GM12878 (cell line): ENCODE measurements at regions of chr7 and their contacts with region 1.

Region 1: DNA sequence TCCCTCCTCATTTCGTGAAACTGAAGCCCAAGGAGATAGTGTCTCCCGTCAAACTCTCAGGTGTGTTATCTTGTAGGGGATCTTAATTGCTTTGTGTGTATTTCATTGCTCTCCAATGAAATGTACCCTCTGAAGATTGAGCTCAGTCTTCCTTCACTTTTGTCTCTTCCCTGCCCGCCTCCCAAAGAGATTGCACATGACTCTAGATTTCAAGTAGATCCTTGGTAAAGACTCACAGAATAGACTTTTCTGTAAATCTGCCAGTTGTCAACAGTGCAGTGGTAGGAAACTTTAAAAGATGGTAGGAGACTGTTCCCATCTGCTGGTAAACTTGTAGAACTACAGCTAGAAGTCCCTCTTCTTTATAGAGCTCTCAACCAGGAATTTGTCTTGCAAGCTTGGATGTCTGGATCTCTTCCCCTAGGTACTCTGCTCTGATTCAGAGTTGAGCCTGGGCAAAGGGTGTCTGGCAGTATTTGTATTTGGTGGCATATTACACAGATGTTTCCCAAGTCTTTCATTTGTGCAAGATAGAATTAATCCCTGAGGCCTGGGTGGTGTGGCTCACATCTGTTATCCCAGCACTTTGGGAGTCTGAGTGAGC is 9.6 kb downstream of the CCL26 start:
- DNase-seq: peak; percentile 40
- ATAC-seq: peak; percentile 92
- H3K4me3 ChIP-seq: no peak overlapping the region
- H3K27ac ChIP-seq: no peak overlapping the region
- H3K4me1 ChIP-seq: no peaks in the 10 kb centered on the region
- H3K27me3 ChIP-seq: no peaks in the 10 kb centered on the region
- CTCF ChIP-seq: peak; percentile 72 to 80 (median 73)
- EP300 ChIP-seq: no peak
- POLR2A ChIP-seq: no peak
- RAD21 ChIP-seq: peak; percentile 94

Region 2: DNA sequence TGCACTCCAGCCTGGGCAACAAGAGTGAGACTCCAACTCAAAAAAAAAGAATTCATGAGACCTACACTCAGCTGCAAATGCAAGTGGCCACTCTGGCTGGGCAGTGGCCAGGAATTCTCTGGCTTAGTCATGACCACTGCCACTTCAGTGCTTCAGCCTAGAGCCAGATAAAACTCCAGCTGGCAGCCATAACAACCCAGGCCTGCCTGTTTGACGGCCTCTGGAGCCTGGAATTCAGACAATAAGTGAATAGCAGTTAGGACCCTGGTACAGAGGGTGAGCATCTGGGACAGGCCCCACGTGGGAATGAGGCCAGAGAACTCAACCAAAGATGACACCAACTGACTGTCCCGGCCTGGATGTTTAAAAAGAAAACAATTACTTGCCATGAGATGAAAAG is 707.7 kb before region 1 on chr7:
- CTCF ChIA-PET with region 1: no interaction called
- POLR2A ChIA-PET with region 1: no interaction called
- RAD21 ChIA-PET with region 1: no interaction called
- SMC1A ChIA-PET with region 1: no interaction called
- in situ Hi-C with region 1: loop called (anchors 25 kb)
- intact Hi-C with region 1: no loop called
- DNase-seq: no peak
- ATAC-seq: no peak
- H3K4me3 ChIP-seq: no peak overlapping the region
- H3K27ac ChIP-seq: no peak overlapping the region
- H3K4me1 ChIP-seq: no peaks in the 10 kb centered on the region
- H3K27me3 ChIP-seq: no peaks in the 10 kb centered on the region
- CTCF ChIP-seq: no peak
- EP300 ChIP-seq: no peak
- POLR2A ChIP-seq: no peak
- RAD21 ChIP-seq: no peak

Region 3: GRCh38 chr7:75642810-75643486 is 119.5 kb before region 1 on chr7:
- CTCF ChIA-PET with region 1: interaction called, 14 read pairs
- POLR2A ChIA-PET with region 1: no interaction called
- RAD21 ChIA-PET with region 1: interaction called, 7 read pairs
- SMC1A ChIA-PET with region 1: interaction called, 6 read pairs
- in situ Hi-C with region 1: no loop called
- intact Hi-C with region 1: loop called (anchors 5 kb)
- DNase-seq: peak; percentile 39
- ATAC-seq: peak; percentile 94
- H3K4me3 ChIP-seq: no peak overlapping the region
- H3K27ac ChIP-seq: no peak overlapping the region
- H3K4me1 ChIP-seq: peaks cover 4% of the 10 kb centered on the region
- H3K27me3 ChIP-seq: peaks cover 0 to 1% of the 10 kb centered on the region in 2 experiments; a peak in 1 of 4 replicates
- CTCF ChIP-seq: peak; percentile 82 to 96 (median 86)
- EP300 ChIP-seq: no peak
- POLR2A ChIP-seq: no peak
- RAD21 ChIP-seq: peak; percentile 93

Region 4: DNA sequence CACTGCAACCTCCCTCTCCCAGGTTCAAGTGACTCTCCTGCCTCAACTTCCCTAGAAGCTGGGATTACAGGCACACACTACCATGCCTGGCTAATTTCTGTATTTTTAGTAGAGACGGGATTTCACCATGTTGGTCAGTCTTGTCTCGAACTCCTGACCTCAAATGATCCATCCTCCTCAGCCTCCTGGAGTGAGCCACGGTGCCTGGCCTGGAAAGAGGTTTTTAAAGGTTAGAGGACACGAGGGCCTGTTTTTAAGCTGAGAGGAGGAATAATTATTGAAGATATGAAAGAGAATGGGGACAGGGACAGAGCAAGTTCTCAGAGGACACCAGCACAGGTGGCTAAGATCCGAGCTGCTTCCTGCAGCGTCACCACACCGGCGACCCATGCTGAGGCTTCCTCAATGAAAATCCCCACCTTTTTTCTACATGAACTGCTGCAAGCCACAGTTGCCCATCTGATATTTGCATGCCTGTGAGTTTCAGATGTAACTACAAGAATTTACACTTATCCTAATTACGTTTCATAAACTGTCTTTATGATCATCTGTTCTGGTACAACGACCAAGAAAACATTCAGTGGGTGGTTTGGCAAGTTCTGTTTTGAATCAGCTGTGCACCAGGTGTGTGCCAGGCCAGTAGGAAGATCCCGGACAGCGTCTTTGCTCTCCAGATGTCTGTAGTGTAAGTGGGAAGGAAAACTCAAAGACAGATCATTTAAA is 99.7 kb before region 1 on chr7:
- CTCF ChIA-PET with region 1: no interaction called
- POLR2A ChIA-PET with region 1: no interaction called
- RAD21 ChIA-PET with region 1: interaction called, 13 read pairs
- SMC1A ChIA-PET with region 1: interaction called, 4 read pairs
- in situ Hi-C with region 1: no loop called
- intact Hi-C with region 1: no loop called
- DNase-seq: peak; percentile 94
- ATAC-seq: peak; percentile 95
- H3K4me3 ChIP-seq: peak overlapping the region; percentile 41; the same call in 1 of the 2 replicates
- H3K27ac ChIP-seq: peak overlapping the region; percentile 81
- H3K4me1 ChIP-seq: peaks cover 23% of the 10 kb centered on the region
- H3K27me3 ChIP-seq: no peaks in the 10 kb centered on the region
- CTCF ChIP-seq: no peak
- EP300 ChIP-seq: peak; percentile 43 to 61; a peak in 1 of 4 replicates
- POLR2A ChIP-seq: peak; percentile 70
- RAD21 ChIP-seq: no peak